ENCODE measurements at regions of chr11 and their contacts with region 1.

Region 1: GRCh38 chr11:83235825-83236224 is 42.3 kb downstream of the ANKRD42 start:
- DNase-seq: no peak
- ATAC-seq: no peak
- H3K4me3 ChIP-seq: no peak overlapping the region
- H3K27ac ChIP-seq: no peak overlapping the region
- H3K4me1 ChIP-seq: no peaks in the 10 kb centered on the region
- H3K27me3 ChIP-seq: no peaks in the 10 kb centered on the region; the same call in 1 of the 2 replicates
- CTCF ChIP-seq: no peak

Region 2: GRCh38 chr11:83257761-83258168 is 21.9 kb after region 1 on chr11:
- CTCF ChIA-PET with region 1: interaction called, 12 read pairs
- POLR2A ChIA-PET with region 1: no interaction called
- in situ Hi-C with region 1: no loop called
- intact Hi-C with region 1: no loop called
- DNase-seq: peak; percentile 55
- ATAC-seq: peak; percentile 73
- H3K4me3 ChIP-seq: no peak overlapping the region
- H3K27ac ChIP-seq: no peak overlapping the region
- H3K4me1 ChIP-seq: no peaks in the 10 kb centered on the region
- H3K27me3 ChIP-seq: no peaks in the 10 kb centered on the region
- CTCF ChIP-seq: no peak

Region 3: GRCh38 chr11:83773950-83774880 is 538.4 kb after region 1 on chr11:
- CTCF ChIA-PET with region 1: interaction called, 14 read pairs
- POLR2A ChIA-PET with region 1: no interaction called
- in situ Hi-C with region 1: no loop called
- intact Hi-C with region 1: no loop called
- DNase-seq: no peak
- ATAC-seq: no peak
- H3K4me3 ChIP-seq: no peak overlapping the region
- H3K27ac ChIP-seq: no peak overlapping the region
- H3K4me1 ChIP-seq: no peaks in the 10 kb centered on the region
- H3K27me3 ChIP-seq: no peaks in the 10 kb centered on the region; the same call in 1 of the 2 replicates
- CTCF ChIP-seq: no peak

Measured in Panc1 (cell line).